ENCODE measurements at regions of chr17 and their contacts with region 1.

Region 1: DNA sequence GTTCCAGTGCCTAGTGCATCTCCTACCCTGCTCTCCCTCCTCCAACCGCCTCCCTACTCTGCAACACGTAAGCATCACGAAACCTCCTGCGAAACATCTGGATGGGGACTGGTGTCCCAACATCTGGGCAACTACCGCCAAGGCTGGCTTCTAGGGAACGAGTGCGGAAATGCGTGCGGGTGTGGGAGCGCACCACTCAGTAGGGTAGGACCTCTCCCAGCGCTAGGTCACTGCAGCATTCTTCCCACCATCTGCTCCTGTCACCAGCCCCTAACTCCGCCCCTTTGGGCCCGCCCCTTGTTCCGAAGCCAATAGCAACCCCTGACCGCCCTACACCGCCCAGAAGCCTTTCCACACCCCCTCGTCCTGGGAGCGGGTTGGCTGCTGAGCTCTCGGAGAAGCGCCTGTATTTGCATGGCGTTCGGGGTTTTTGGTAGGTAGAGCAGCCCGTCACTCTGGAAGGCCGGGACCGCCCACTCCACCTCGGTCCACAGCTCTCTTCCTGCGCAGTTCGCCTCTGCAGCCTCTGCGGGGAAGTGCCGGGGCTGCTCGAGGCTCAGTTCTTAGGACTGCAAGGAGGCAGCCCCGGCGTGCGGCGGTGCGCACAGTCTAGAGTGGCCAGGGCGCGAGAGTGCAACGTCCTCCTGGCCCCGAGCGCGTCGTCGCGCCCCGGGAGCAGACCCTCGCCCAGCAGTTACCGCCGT is at the start of gene HS3ST3B1:
- DNase-seq: peak; percentile 99
- total RNA-seq, gene HS3ST3B1: 2.6 TPM

Region 2: DNA sequence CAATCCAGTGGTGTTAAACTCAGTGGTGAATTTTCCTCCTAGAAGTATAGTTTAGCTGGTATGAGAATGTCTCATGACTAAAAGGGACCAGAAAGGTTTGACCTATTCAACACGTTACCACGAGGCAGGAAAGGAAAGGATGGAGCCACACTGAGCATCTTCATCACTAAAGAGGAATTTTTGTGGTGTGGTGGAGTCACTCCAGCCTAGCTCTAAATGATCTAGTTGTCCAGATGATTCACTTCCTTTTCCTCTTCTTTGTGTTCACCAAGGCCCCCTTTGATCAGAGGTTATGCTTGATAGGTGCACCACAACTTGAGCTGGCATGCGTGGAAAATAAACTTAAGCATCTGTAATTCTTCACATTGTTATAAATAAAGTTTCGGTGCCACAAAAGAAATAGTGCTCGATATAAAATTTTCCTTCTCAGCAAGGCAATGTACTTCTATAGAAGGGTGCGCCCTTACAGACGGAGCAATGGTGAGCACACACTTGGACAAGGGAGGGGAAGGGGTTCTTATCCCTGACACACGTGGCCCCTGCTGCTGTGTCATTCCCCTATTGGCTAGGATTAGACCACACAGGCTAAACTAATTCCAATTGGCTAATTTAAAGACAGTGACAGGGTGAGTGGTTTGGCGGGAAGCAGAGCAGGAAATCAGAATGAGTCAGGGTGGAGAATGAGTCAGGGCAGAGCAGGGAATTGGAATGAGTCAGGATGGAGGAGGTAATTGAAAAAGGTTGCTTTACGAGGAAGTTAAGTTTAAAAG is 953.5 kb before region 1 on chr17:
- intact Hi-C with region 1: loop called (anchors 10 kb)
- DNase-seq: no peak

Region 3: DNA sequence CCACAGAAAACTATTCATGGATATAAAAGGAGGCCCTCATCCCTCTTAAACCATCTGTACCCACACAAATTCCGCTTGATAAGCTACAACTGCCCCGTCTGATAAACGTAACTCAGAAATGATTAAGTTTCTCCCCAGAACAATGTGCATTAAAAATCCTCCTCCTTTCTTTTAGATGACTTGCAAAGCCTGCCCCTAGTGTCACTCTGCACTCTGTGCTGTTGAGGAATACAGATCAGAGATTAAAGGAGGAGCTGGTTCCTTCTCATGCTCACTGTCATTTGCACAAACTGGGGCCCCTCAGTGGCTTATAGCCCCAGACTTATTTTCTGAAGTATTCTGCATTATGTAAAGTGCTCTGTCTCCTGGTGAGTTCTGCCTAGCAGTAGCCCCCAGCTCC is 97.3 kb before region 1 on chr17:
- intact Hi-C with region 1: loop called (anchors 10 kb)
- DNase-seq: no peak

Measured in cardiac septum (tissue), 1 donor.